Panc1 (cell line): ENCODE measurements at regions of chr2 and their contacts with region 1.

Region 1: DNA sequence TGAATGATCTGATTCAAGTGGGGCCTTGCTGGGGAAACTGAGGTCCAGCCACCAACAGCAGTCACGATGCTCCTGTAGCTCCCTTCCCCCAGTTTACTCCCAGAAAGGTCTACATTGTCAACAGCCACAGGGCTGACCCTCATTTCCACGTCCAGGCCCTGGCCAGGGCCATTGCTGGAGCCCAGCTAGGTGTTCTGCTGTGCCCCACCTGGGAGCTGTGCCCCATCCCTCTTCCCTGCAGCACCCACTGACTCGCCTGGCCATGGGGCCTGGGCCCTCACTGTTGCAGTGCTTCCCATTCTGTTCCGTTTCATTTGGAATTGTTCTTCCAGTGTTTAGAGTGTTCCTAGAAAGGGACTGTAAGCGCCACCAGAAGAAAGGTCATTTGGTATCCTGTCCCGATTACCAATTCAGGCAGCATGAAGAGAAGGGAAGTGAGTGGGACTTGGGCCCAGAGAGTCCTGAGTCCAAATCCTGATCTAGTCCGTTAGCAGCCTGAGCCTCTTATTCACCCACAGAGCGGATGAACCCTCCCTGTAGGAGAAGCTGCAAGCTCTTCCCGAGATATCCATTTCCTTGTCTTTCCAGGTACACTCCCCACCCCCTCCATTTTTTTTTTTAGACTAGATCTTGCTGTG is 73.1 kb upstream of the HPCAL1 start:
- DNase-seq: no peak
- ATAC-seq: no peak
- H3K4me3 ChIP-seq: no peak overlapping the region
- H3K27ac ChIP-seq: no peak overlapping the region
- H3K4me1 ChIP-seq: no peaks in the 10 kb centered on the region
- H3K27me3 ChIP-seq: no peaks in the 10 kb centered on the region
- CTCF ChIP-seq: no peak

Region 2: DNA sequence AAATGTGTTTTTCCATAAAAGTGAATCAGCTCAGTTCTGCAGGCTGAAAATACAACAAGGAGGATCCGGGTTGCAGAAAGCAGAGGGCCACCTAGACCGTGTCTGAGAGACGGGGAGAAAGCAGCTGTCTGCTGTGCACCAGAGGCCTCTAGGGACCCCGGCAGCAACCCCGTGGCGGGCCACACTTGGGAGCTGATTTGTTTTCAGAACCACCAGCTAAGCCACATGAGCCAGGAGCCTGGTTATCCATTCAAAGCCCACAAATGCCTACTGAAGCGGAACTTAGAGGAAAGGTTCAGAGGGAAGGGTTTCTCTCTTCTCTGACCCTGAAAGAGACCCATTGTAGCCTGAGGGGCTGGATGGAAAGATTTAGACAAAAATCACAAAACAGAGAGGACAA is 1576.1 kb before region 1 on chr2:
- CTCF ChIA-PET with region 1: no interaction called
- POLR2A ChIA-PET with region 1: no interaction called
- in situ Hi-C with region 1: no loop called
- intact Hi-C with region 1: no loop called
- DNase-seq: no peak
- ATAC-seq: no peak
- H3K4me3 ChIP-seq: no peak overlapping the region
- H3K27ac ChIP-seq: no peak overlapping the region
- H3K4me1 ChIP-seq: no peaks in the 10 kb centered on the region
- H3K27me3 ChIP-seq: no peaks in the 10 kb centered on the region
- CTCF ChIP-seq: no peak

Region 3: DNA sequence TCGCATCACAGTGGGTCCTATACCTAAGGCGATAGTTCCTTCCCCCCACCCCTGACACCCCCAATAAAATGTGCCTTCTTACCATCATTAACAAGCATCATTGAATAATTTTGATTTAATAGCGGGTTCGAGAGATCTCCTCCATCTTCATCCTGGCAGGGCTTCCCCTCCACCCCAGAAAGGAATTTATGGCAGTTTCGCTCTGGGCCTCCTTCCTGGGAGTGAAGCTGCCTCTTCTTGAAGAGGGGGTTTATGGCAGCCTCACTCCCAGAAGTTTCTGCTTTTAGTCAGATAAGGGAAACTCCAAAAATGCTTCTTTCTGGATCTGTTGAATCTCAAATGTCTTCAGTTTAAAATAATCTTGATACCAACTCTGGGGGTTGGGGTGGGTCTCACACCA is 61.4 kb before region 1 on chr2:
- CTCF ChIA-PET with region 1: interaction called, 12 read pairs
- POLR2A ChIA-PET with region 1: interaction called, 3 read pairs
- in situ Hi-C with region 1: no loop called
- intact Hi-C with region 1: no loop called
- DNase-seq: no peak
- ATAC-seq: no peak
- H3K4me3 ChIP-seq: no peak overlapping the region
- H3K27ac ChIP-seq: no peak overlapping the region
- H3K4me1 ChIP-seq: peaks cover 6% of the 10 kb centered on the region
- H3K27me3 ChIP-seq: no peaks in the 10 kb centered on the region
- CTCF ChIP-seq: no peak

Region 4: DNA sequence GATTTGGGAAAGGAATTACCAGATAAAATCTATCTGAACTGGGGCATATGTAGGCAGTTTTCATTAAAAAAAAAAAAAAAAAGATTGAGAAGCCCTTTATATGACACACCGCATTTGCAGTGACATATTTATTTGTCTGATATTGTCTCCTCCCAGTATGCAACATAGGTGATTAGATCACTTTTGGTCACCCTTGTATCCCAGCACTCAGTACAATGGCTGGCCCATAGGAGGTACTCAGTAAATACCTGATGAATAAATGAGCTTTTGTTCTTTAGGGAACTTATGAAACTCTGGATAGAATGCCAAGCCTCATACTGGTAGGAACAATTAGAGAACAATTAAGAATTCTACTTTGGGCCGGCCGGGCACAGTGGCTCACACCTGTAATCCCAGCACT is 1259.2 kb after region 1 on chr2:
- CTCF ChIA-PET with region 1: no interaction called
- POLR2A ChIA-PET with region 1: interaction called, 14 read pairs
- in situ Hi-C with region 1: no loop called
- intact Hi-C with region 1: no loop called
- DNase-seq: no peak
- ATAC-seq: no peak
- H3K4me3 ChIP-seq: no peak overlapping the region
- H3K27ac ChIP-seq: no peak overlapping the region
- H3K4me1 ChIP-seq: no peaks in the 10 kb centered on the region
- H3K27me3 ChIP-seq: peaks cover 13% of the 10 kb centered on the region
- CTCF ChIP-seq: no peak